ENCODE measurements at regions of chr14 and their contacts with region 1.

Region 1: GRCh38 chr14:56474419-56475022 is 105.1 kb upstream of the TMEM260 start:
- DNase-seq: peak; percentile 93
- ATAC-seq: peak; percentile 71
- H3K4me3 ChIP-seq: no peak overlapping the region
- H3K27ac ChIP-seq: no peak overlapping the region
- H3K4me1 ChIP-seq: no peaks in the 10 kb centered on the region
- H3K27me3 ChIP-seq: peaks cover 69% of the 10 kb centered on the region
- CTCF ChIP-seq: peak; percentile 98

Region 2: DNA sequence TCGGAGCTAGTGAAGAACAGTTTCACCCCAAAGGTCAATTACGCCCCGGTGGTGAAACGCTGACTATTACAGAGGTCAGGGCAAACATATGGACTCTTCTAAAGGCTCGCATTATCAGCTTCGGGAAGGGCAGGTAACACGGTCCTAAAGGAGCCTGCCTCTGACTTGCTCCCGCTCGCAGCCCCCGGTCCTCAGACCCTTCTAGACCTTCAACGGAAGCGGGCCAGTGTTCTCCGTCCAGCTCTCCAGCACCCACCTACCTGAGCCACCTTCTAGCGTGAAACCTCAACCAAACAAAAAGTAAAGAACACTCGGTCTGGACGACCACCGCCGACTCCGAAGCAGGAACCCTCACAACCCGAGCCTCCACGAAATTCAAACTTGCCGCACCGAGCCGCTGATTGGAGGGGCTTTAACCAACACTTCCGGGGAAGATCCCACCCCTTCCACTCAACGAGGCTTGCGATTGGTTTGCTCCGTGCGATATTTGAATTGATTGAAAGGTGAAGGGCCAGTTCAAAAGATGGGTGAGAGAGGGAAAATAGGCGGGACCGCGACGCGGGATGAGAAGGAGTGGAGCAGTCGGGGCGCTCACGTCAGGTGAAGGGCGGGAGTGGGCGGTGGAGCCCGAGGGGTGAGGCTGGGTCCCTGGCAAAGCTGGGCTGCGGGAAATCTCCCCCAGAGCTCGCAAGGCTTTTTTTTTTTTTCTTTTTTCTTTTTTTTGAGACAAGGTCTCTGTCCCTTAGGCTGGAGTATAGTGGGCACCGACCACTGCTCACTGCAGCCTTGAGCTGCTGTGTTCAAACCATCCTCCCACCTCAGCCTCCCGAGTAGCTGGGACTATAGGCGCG is 1283.1 kb before region 1 on chr14 and contains the start of gene DLGAP5:
- CTCF ChIA-PET with region 1: interaction called, 10 read pairs
- POLR2A ChIA-PET with region 1: no interaction called
- intact Hi-C with region 1: no loop called
- DNase-seq: peak; percentile 100
- ATAC-seq: peak; percentile 96
- H3K4me3 ChIP-seq: peak within 1 kb of the TSS; percentile 73
- H3K27ac ChIP-seq: peak within 1 kb of the TSS; percentile 5
- H3K4me1 ChIP-seq: peaks cover 16% of the 10 kb centered on the region
- H3K27me3 ChIP-seq: no peaks in the 10 kb centered on the region
- CTCF ChIP-seq: no peak
- total RNA-seq, gene DLGAP5: 94.1 and 97.9 TPM in 2 replicates

Region 3: GRCh38 chr14:55245657-55246268 is 1228.8 kb before region 1 on chr14:
- CTCF ChIA-PET with region 1: no interaction called
- POLR2A ChIA-PET with region 1: no interaction called
- intact Hi-C with region 1: loop called (anchors 10 kb)
- DNase-seq: peak; percentile 76
- ATAC-seq: peak; percentile 84
- H3K4me3 ChIP-seq: no peak overlapping the region
- H3K27ac ChIP-seq: no peak overlapping the region
- H3K4me1 ChIP-seq: no peaks in the 10 kb centered on the region
- H3K27me3 ChIP-seq: 0 out of 2 replicates have a peak, but pooled peaks cover 3% of the 10 kb centered on the region
- CTCF ChIP-seq: peak; percentile 98

Region 4: GRCh38 chr14:55438066-55438683 is 1036.3 kb before region 1 on chr14:
- CTCF ChIA-PET with region 1: interaction called, 6 read pairs
- POLR2A ChIA-PET with region 1: no interaction called
- intact Hi-C with region 1: loop called (anchors 1 kb)
- DNase-seq: peak; percentile 92
- ATAC-seq: peak; percentile 73
- H3K4me3 ChIP-seq: no peak overlapping the region
- H3K27ac ChIP-seq: no peak overlapping the region
- H3K4me1 ChIP-seq: peaks cover 21% of the 10 kb centered on the region
- H3K27me3 ChIP-seq: no peaks in the 10 kb centered on the region
- CTCF ChIP-seq: peak; percentile 99

Region 5: DNA sequence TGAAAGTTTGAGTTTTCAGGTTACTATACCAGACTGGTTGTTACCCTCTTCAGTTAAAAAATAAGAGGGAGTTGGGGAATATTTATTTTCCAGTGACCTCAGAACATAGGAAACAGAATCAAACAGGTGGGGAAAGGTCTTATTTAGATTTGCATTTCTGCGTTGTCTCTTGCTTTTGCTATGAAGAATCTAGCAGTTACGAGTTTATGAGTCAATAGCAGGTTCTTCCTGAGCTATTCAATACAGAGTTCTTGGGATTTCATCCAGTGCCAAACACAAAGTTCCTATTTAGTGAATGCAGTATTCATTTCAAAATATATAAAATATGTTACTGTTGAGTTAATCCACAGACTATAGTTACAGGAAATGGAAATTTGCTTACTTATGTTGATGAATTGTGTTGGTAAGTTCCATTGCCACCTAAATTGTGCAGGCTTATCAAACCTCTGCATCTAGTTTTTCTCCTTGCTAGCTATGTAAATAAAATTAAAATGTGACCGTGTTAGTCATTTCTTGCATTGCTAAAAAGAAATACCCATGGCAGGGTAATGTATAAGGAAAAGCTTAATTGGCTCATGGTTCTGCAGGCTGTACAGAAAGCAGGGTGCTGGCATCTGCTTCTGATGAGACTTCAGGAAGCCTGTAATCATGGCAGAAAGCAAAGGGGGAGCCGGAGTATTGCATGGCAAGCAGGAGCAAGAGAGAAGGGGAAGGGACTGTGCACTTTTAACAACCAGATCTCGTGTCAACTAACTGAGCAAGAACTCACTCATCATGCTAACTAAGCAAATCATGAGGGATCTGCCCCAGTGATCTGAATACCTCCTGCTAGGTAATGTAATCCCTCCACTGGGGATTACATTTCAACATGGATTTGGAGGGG is 784.3 kb before region 1 on chr14:
- CTCF ChIA-PET with region 1: interaction called, 7 read pairs
- POLR2A ChIA-PET with region 1: no interaction called
- intact Hi-C with region 1: loop called (anchors 5 kb)
- DNase-seq: peak; percentile 83
- ATAC-seq: peak; percentile 73
- H3K4me3 ChIP-seq: peak overlapping the region; percentile 7; the same call in 1 of the 2 replicates
- H3K27ac ChIP-seq: peak overlapping the region; percentile 51
- H3K4me1 ChIP-seq: peaks cover 47% of the 10 kb centered on the region
- H3K27me3 ChIP-seq: no peaks in the 10 kb centered on the region
- CTCF ChIP-seq: no peak

Region 6: GRCh38 chr14:56205881-56206280 is 268.6 kb before region 1 on chr14:
- CTCF ChIA-PET with region 1: no interaction called
- POLR2A ChIA-PET with region 1: no interaction called
- intact Hi-C with region 1: no loop called
- DNase-seq: no peak
- ATAC-seq: no peak
- H3K4me3 ChIP-seq: no peak overlapping the region
- H3K27ac ChIP-seq: no peak overlapping the region
- H3K4me1 ChIP-seq: no peaks in the 10 kb centered on the region
- H3K27me3 ChIP-seq: peaks cover 73% of the 10 kb centered on the region
- CTCF ChIP-seq: no peak

Region 7: DNA sequence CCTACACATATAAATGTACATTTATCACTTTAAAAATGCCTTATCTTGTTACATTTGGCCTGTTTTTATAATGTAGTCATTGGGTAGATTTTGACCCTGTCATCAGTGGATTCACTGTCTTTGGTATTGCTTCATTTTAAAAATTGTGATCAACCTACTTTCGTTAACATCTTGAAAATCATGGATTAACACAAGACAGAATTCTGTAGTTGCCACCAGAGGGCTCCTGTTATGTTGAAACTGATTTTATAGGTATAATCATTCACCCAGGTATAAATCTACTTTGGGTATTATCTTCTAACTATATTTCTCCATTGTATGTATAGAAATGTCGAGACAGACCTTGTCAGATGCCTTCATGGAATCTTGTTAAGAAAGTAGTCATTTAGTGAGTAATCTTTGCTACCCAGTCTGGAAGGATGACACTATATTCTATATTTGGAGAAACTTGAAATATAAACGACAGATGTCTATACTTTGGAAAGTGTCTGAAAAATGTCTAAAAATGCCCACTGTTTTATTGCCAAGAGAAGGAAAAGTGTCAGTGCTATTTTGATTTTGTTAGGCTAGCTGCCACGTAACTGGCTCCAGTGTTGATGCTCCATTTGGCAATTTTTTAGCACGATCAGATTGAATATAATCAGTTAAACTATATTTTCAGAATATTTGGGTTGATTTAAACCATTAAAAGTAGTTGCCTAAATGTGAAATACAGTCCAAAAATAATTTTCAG is 226.9 kb before region 1 on chr14:
- CTCF ChIA-PET with region 1: interaction called, 7 read pairs
- POLR2A ChIA-PET with region 1: no interaction called
- intact Hi-C with region 1: loop called (anchors 1 kb)
- DNase-seq: peak; percentile 74
- ATAC-seq: peak; percentile 46; the same call in 1 of the 2 replicates
- H3K4me3 ChIP-seq: no peak overlapping the region
- H3K27ac ChIP-seq: no peak overlapping the region
- H3K4me1 ChIP-seq: peaks cover 11% of the 10 kb centered on the region
- H3K27me3 ChIP-seq: peaks cover 40% of the 10 kb centered on the region
- CTCF ChIP-seq: peak; percentile 94

Region 8: GRCh38 chr14:56422703-56423213 is 51.8 kb before region 1 on chr14:
- CTCF ChIA-PET with region 1: interaction called, 10 read pairs
- POLR2A ChIA-PET with region 1: no interaction called
- intact Hi-C with region 1: no loop called
- DNase-seq: peak; percentile 79
- ATAC-seq: peak; percentile 92
- H3K4me3 ChIP-seq: no peak overlapping the region
- H3K27ac ChIP-seq: no peak overlapping the region
- H3K4me1 ChIP-seq: no peaks in the 10 kb centered on the region
- H3K27me3 ChIP-seq: peaks cover 62% of the 10 kb centered on the region
- CTCF ChIP-seq: peak; percentile 93